Calu3 (cell line): ENCODE measurements at regions of chr6 and their contacts with region 1.

Region 1: GRCh38 chr6:41318654-41319565 is 16.5 kb upstream of the NCR2 start:
- DNase-seq: peak; percentile 92
- H3K4me3 Mint-ChIP-seq: peak overlapping the region; percentile 45
- H3K27ac Mint-ChIP-seq: peak overlapping the region; percentile 48
- H3K4me1 Mint-ChIP-seq: peaks cover 40% of the 10 kb centered on the region
- H3K27me3 Mint-ChIP-seq: peaks cover 18% of the 10 kb centered on the region
- CTCF ChIP-seq: peak; percentile 100

Region 2: DNA sequence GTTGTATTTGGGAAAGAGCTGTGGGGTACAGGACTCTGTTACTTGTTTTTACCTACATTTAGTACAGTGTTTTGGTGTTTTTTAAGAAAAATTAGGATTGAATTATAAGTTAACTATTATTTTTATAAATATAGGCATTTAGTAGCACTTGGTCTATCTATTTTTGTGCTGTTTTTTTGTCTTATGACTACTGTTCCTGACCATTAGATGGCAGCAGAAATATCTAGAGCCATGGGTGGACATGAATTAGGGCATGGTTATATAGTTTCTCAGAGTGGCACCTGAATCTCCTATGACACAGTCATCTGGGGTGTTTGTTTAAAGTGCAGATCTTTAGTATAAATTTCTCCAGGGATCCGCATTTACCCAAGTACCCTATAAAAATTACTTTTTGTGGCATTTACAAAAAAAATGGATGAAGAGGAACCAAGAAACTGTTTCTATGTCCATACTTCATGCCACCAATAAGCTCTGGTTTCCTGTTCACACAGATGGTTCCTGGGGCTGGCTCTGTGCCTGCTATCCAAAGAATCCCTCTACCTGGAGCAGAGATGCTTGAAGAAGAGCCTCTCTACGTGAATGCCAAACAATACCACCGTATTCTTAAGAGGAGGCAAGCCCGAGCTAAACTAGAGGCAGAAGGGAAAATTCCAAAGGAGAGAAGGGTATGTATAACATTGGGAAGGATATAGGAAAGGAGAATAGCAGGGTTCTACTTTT is 226.3 kb before region 1 on chr6:
- CTCF ChIA-PET with region 1: interaction called, 3 read pairs
- intact Hi-C with region 1: loop called (anchors 1 kb)
- DNase-seq: no peak
- H3K4me3 Mint-ChIP-seq: no peak overlapping the region
- H3K27ac Mint-ChIP-seq: no peak overlapping the region
- H3K4me1 Mint-ChIP-seq: no peaks in the 10 kb centered on the region
- H3K27me3 Mint-ChIP-seq: no peaks in the 10 kb centered on the region
- CTCF ChIP-seq: peak; percentile 27

Region 3: GRCh38 chr6:41182069-41183034 is 136.6 kb before region 1 on chr6:
- CTCF ChIA-PET with region 1: interaction called, 3 read pairs
- intact Hi-C with region 1: loop called (anchors 2 kb)
- DNase-seq: peak; percentile 62
- H3K4me3 Mint-ChIP-seq: no peak overlapping the region
- H3K27ac Mint-ChIP-seq: no peak overlapping the region
- H3K4me1 Mint-ChIP-seq: no peaks in the 10 kb centered on the region
- H3K27me3 Mint-ChIP-seq: peaks cover 41% of the 10 kb centered on the region
- CTCF ChIP-seq: peak; percentile 51

Region 4: DNA sequence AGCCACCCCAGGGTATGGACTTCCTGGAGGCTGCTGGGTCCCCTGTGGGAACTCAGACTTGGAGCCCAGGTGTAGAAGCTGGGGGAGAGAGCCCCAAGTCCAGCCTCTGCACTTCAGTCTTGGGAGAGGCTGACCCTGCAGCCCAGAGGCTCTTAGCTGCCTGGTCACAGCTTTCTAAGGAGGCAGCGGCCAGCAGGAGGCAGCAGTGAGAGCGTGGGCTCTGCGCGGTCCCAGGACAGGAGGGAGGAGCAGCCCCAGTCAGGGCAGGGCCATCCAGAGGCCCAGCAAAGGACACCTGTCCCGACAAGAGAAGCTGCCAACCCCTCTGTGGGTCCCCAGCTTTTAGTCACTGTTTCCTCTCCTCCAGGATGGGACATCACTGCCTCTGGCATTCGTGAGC is 127.3 kb before region 1 on chr6:
- CTCF ChIA-PET with region 1: interaction called, 10 read pairs
- intact Hi-C with region 1: no loop called
- DNase-seq: peak; percentile 72
- H3K4me3 Mint-ChIP-seq: no peak overlapping the region
- H3K27ac Mint-ChIP-seq: no peak overlapping the region
- H3K4me1 Mint-ChIP-seq: no peaks in the 10 kb centered on the region
- H3K27me3 Mint-ChIP-seq: peaks cover 86% of the 10 kb centered on the region
- CTCF ChIP-seq: peak; percentile 69

Region 5: GRCh38 chr6:41278699-41279405 is 40.1 kb before region 1 on chr6:
- CTCF ChIA-PET with region 1: interaction called, 8 read pairs
- intact Hi-C with region 1: loop called (anchors 1 kb)
- DNase-seq: peak; percentile 83
- H3K4me3 Mint-ChIP-seq: no peak overlapping the region
- H3K27ac Mint-ChIP-seq: no peak overlapping the region
- H3K4me1 Mint-ChIP-seq: peaks cover 28% of the 10 kb centered on the region
- H3K27me3 Mint-ChIP-seq: peaks cover 30% of the 10 kb centered on the region
- CTCF ChIP-seq: peak; percentile 65